T-cell (primary cell): ENCODE measurements at regions of chr10 and their contacts with region 1.

Region 1: DNA sequence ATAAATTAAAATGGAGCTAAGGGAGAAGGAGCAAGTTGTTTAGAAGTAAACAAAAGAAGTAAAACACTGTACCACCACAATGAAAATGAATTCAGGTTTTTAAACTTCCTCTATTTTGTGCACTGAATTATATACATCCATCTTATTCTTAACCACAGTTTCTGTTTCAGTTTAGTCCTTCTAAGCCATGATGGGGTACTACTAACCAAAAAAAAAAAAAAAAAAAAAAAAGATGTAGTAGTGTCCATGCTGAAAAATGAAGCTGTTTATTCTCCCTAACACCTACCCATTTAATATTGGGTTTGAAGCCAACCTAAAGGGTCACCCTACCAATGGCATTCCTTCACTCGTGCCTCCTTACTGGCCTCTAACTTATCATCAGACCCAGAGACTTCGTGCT is 3.4 kb upstream of the BMPR1A start:
- DNase-seq: no peak
- ATAC-seq: no peak
- H3K4me3 ChIP-seq: no peak overlapping the region
- H3K4me3 Mint-ChIP-seq: no peak overlapping the region
- H3K27ac ChIP-seq: no peak overlapping the region
- H3K27ac Mint-ChIP-seq: no peak overlapping the region
- H3K4me1 ChIP-seq: peaks cover 0 to 11% of the 10 kb centered on the region in 2 experiments
- H3K4me1 Mint-ChIP-seq: peaks cover 13 to 14% (median 13%) of the 10 kb centered on the region in 3 donors
- H3K27me3 ChIP-seq: peaks cover 3 to 10% of the 10 kb centered on the region in 2 experiments
- H3K27me3 Mint-ChIP-seq: peaks cover 0 to 4% of the 10 kb centered on the region in 2 donors

Region 2: DNA sequence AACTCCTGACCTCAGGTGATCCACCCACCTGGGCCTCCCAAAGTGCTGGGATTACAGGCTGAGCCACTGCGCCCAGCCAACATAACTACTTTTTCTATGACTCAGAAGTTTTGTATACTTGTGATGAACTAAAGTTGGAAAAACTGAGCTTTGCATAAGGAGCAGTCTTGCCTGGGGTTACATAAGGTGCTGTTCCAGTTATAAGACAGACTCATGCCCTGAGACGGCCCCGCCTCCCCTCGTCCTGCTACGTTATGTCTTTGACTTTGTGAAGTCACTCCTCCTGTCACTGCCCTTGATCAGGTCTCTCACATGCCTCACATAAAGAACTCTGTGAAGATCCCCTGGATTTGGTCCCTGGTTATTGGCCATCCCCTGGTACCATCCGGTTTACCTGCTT is 139.1 kb before region 1 on chr10:
- CTCF ChIA-PET with region 1: no interaction called
- POLR2A ChIA-PET with region 1: no interaction called
- DNase-seq: no peak
- ATAC-seq: no peak
- H3K4me3 ChIP-seq: no peak overlapping the region
- H3K4me3 Mint-ChIP-seq: no peak overlapping the region
- H3K27ac ChIP-seq: no peak overlapping the region
- H3K27ac Mint-ChIP-seq: no peak overlapping the region
- H3K4me1 ChIP-seq: no peaks in the 10 kb centered on the region
- H3K4me1 Mint-ChIP-seq: no peaks in the 10 kb centered on the region
- H3K27me3 ChIP-seq: peaks cover 0 to 14% of the 10 kb centered on the region in 2 experiments
- H3K27me3 Mint-ChIP-seq: peaks cover 21 to 33% of the 10 kb centered on the region in 2 donors

Region 3: GRCh38 chr10:86728056-86728455 is 25.0 kb before region 1 on chr10:
- CTCF ChIA-PET with region 1: interaction called in 1 of 2 experiments, 10 read pairs
- POLR2A ChIA-PET with region 1: no interaction called
- DNase-seq: no peak
- ATAC-seq: no peak
- H3K4me3 ChIP-seq: no peak overlapping the region
- H3K4me3 Mint-ChIP-seq: no peak overlapping the region
- H3K27ac ChIP-seq: no peak overlapping the region
- H3K27ac Mint-ChIP-seq: no peak overlapping the region
- H3K4me1 ChIP-seq: peaks cover 0 to 4% of the 10 kb centered on the region in 2 experiments
- H3K4me1 Mint-ChIP-seq: peaks cover 4 to 6% (median 6%) of the 10 kb centered on the region in 3 donors
- H3K27me3 ChIP-seq: peaks cover 3% of the 10 kb centered on the region in 2 experiments
- H3K27me3 Mint-ChIP-seq: peaks cover 4 to 11% of the 10 kb centered on the region in 2 donors

Region 4: DNA sequence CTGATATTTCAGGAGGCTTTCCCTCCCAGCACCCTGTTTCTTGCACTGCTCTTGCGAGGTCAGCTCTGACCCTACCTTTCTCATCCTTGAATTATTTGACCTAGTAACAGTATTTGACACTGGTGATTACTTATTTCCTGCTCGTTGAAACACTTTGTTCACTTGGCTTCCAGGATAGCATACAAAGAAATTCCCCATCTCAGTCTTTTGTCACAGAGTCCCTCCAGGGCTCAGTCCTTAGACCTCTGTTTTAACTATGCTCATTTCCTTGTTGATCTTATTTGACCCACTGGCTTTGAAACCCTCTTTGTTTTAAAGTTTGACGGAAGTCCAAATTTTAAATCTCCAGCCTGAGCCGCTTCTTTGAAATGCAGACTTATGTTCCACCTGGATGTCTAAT is 33.3 kb after region 1 on chr10:
- CTCF ChIA-PET with region 1: no interaction called
- POLR2A ChIA-PET with region 1: no interaction called
- DNase-seq: no peak
- ATAC-seq: no peak
- H3K4me3 ChIP-seq: no peak overlapping the region
- H3K4me3 Mint-ChIP-seq: no peak overlapping the region
- H3K27ac ChIP-seq: no peak overlapping the region
- H3K27ac Mint-ChIP-seq: no peak overlapping the region
- H3K4me1 ChIP-seq: no peaks in the 10 kb centered on the region
- H3K4me1 Mint-ChIP-seq: peaks cover 0 to 10% (median 4%) of the 10 kb centered on the region in 3 donors
- H3K27me3 ChIP-seq: peaks cover 0 to 2% of the 10 kb centered on the region in 2 experiments
- H3K27me3 Mint-ChIP-seq: no peaks in the 10 kb centered on the region